ENCODE measurements at regions of chr13 and their contacts with region 1.

Region 1: GRCh38 chr13:32446773-32447465 is 19.0 kb upstream of the N4BP2L1 start:
- DNase-seq: no peak
- H3K4me3 ChIP-seq: no peak overlapping the region
- H3K27ac ChIP-seq: no peak overlapping the region
- H3K4me1 ChIP-seq: peaks cover 0 to 3% (median 0%) of the 10 kb centered on the region in 4 donors
- H3K27me3 ChIP-seq: no peaks in the 10 kb centered on the region
- CTCF ChIP-seq: no peak
- EP300 ChIP-seq: no peak
- POLR2A ChIP-seq: no peak

Region 2: DNA sequence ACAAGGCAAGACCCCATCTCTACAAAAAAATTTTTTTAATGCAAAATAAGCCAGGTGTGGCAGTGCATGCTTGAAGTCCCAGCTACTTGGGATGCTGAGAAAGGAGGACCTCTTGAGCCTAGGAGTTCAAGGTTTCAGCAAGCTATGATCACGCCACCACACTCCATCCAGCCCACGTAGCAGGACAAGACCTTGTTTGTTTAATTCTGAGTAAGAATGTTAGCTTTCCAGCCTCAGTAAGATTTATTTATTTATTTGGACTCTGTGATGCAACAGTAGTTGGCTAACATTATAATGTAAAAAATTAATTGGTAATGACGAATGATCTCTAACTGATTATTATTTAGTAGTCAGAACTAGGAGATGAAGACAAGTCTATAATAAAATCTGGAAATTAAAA is 68.3 kb after region 1 on chr13:
- in situ Hi-C with region 1: no loop called
- intact Hi-C with region 1: no loop called
- DNase-seq: no peak
- H3K4me3 ChIP-seq: no peak overlapping the region
- H3K27ac ChIP-seq: no peak overlapping the region
- H3K4me1 ChIP-seq: no peaks in the 10 kb centered on the region
- H3K27me3 ChIP-seq: no peaks in the 10 kb centered on the region
- CTCF ChIP-seq: no peak
- EP300 ChIP-seq: no peak
- POLR2A ChIP-seq: no peak

Region 3: GRCh38 chr13:33730147-33730546 is 1283.2 kb after region 1 on chr13:
- in situ Hi-C with region 1: no loop called
- intact Hi-C with region 1: loop called (anchors 5 kb)
- DNase-seq: no peak
- H3K4me3 ChIP-seq: no peak overlapping the region
- H3K27ac ChIP-seq: no peak overlapping the region
- H3K4me1 ChIP-seq: peaks cover 0 to 5% (median 0%) of the 10 kb centered on the region in 4 donors
- H3K27me3 ChIP-seq: no peaks in the 10 kb centered on the region
- CTCF ChIP-seq: no peak
- EP300 ChIP-seq: no peak
- POLR2A ChIP-seq: no peak

Region 4: DNA sequence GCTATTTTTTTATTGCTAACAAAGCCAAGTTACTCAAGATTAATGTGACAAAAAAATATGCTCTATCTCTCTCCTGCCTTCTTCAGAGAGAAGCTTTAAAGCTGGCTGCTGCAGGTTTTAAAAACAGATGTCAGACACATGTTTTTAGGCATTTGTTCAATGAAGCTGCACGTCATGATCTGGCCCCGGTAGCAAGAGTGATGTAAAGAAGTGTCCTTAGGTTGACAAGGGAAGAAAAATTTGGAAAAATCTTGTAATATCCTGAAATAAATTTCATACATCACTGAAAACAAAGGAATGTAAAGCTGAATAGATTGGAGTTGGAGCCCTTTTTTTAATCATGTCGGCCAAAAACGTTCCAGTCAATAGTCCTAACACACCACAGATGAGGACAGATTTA is 1963.8 kb after region 1 on chr13:
- in situ Hi-C with region 1: no loop called
- intact Hi-C with region 1: no loop called
- DNase-seq: no peak
- H3K4me3 ChIP-seq: no peak overlapping the region
- H3K27ac ChIP-seq: no peak overlapping the region
- H3K4me1 ChIP-seq: no peaks in the 10 kb centered on the region
- H3K27me3 ChIP-seq: no peaks in the 10 kb centered on the region
- CTCF ChIP-seq: no peak
- EP300 ChIP-seq: no peak
- POLR2A ChIP-seq: no peak

Measured in transverse colon (tissue), 4 donors.